ENCODE measurements at regions of chr12 and their contacts with region 1.

Region 1: DNA sequence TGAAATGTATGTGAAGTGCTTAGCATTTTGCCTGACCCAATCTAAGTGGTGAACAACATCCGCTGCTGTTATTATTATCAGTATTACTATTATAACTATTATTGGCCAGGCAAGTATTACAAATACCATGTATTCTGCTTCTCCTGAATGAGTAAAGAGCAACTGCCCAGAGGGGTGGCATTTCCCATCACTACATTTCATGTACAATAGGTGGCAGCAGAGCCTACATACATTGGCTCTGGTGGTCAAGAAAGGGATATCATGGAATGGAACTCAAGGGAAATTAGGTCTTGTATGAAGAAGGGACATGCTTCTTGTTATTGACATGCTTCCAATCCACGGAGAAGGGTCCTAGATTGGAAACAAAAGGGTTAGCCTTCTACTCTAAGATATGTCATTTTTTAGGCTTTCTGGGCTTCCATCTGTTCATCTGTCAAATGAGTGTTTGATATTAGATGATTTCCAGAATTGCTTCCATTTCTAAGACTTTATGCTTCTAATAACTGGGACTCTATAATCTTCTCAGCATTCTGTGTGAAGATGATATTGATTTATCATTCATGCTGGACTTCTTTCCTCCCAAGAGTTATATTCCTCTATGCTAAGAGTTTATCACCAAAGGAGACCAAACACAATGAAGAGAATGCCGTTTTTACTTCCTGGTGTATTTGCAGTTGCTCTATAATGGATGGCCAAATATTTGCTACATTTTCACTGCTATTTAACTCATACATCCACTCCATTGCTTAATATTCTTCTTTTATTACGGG is 239.1 kb downstream of the SSPN start:
- DNase-seq: no peak
- ATAC-seq: peak; percentile 42
- H3K4me3 Mint-ChIP-seq: no peak overlapping the region
- H3K27ac Mint-ChIP-seq: no peak overlapping the region
- H3K4me1 Mint-ChIP-seq: no peaks in the 10 kb centered on the region
- H3K27me3 Mint-ChIP-seq: no peaks in the 10 kb centered on the region

Region 2: DNA sequence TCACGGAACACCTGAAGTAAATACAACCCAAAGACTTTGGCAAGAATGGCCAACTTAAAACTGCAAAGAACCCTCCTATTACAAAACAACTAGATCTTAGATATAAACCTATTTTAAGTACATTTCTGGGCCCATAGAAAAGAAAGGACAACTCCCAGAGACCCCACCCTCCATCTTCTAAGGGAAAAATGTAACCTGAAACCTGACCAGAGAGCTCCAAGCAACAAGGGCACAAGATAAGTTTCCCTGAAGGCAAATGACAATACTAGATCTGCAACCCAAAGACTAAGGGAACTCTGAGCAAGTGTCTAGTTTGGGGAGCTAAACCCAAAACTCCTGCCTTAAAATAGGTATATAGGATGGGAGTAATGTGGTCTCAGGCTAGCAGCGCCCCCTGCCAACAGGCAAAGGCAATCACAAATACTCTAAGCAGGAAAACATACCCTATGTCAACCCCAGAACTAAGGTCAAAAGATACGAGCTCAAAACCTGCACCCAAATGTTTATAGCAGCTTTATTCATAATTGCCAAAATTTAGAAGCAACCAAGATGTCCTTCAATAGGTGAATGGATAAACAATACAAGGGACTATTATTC is 179.6 kb after region 1 on chr12:
- CTCF ChIA-PET with region 1: no interaction called
- POLR2A ChIA-PET with region 1: no interaction called
- intact Hi-C with region 1: loop called in 1 of 2 experiments (anchors 10 kb)
- DNase-seq: peak; percentile 57
- ATAC-seq: no peak
- H3K4me3 Mint-ChIP-seq: no peak overlapping the region
- H3K27ac Mint-ChIP-seq: no peak overlapping the region
- H3K4me1 Mint-ChIP-seq: no peaks in the 10 kb centered on the region
- H3K27me3 Mint-ChIP-seq: no peaks in the 10 kb centered on the region

Region 3: DNA sequence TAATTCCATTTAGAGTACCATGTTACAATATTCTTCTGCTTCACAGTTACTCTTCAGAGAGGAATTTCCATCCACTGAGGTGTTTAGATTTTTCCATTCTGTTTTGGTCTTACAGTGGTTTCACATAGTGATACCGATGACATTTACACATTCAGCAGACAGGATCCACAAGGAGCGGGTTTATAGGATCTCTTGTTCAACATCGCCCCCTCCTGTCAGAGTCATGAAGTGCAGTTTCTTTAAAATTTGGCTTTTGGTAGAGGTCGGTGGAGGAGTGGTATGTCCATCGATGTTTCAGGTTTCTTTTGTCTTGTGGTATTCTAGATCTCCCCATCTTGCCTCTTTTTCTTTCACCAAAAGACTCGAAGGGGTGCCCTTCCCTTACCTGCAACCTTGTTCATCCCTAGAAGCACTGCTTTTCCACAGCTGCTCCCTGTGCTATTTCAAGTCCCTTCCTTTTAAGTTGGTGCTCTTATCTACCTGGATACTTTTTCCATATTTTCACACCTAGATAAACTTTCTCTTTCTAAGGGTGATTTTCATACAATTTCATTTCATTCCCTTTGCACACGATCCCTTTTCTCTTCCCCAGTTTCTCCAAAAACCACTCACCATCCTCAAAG is 217.2 kb after region 1 on chr12:
- CTCF ChIA-PET with region 1: no interaction called
- POLR2A ChIA-PET with region 1: no interaction called
- intact Hi-C with region 1: no loop called
- DNase-seq: peak; percentile 59
- ATAC-seq: peak; percentile 55
- H3K4me3 Mint-ChIP-seq: no peak overlapping the region
- H3K27ac Mint-ChIP-seq: no peak overlapping the region
- H3K4me1 Mint-ChIP-seq: no peaks in the 10 kb centered on the region
- H3K27me3 Mint-ChIP-seq: no peaks in the 10 kb centered on the region

Region 4: GRCh38 chr12:26680727-26681455 is 246.4 kb after region 1 on chr12:
- CTCF ChIA-PET with region 1: no interaction called
- POLR2A ChIA-PET with region 1: no interaction called
- intact Hi-C with region 1: no loop called
- DNase-seq: no peak
- ATAC-seq: no peak
- H3K4me3 Mint-ChIP-seq: no peak overlapping the region
- H3K27ac Mint-ChIP-seq: no peak overlapping the region
- H3K4me1 Mint-ChIP-seq: no peaks in the 10 kb centered on the region
- H3K27me3 Mint-ChIP-seq: no peaks in the 10 kb centered on the region

Region 5: DNA sequence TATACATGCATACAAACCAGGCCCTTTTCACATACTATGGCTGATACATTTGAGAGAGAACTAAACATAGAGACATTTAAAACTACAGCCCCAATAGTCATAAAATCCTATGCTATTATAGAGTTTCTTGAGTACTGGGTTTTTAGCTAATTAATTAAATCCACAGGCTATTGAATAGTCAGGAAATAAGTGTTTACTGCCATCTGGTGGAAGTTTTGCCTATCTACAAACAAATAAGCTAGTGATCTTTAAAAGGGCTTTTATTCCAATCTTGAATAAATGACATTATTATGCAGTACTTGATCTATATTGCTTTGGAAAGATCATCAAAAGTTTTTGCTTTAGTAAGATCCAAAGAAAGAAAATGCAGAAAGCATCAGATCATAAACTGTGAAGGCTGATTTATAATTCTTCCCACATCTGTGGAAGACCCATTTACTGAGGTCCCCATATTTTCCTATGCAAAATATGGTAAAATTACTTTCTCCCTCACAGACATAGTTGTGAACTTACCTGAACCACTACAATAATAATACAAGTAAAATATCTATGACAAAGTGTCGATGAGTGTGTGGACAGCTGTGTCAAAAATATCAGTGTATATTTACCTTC is 267.2 kb after region 1 on chr12:
- CTCF ChIA-PET with region 1: no interaction called
- POLR2A ChIA-PET with region 1: no interaction called
- intact Hi-C with region 1: loop called in 1 of 2 experiments (anchors 5 kb)
- DNase-seq: no peak
- ATAC-seq: peak; percentile 51
- H3K4me3 Mint-ChIP-seq: no peak overlapping the region
- H3K27ac Mint-ChIP-seq: no peak overlapping the region
- H3K4me1 Mint-ChIP-seq: peaks cover 13% of the 10 kb centered on the region
- H3K27me3 Mint-ChIP-seq: no peaks in the 10 kb centered on the region